ENCODE measurements at regions of chr6 and their contacts with region 1.

Region 1: DNA sequence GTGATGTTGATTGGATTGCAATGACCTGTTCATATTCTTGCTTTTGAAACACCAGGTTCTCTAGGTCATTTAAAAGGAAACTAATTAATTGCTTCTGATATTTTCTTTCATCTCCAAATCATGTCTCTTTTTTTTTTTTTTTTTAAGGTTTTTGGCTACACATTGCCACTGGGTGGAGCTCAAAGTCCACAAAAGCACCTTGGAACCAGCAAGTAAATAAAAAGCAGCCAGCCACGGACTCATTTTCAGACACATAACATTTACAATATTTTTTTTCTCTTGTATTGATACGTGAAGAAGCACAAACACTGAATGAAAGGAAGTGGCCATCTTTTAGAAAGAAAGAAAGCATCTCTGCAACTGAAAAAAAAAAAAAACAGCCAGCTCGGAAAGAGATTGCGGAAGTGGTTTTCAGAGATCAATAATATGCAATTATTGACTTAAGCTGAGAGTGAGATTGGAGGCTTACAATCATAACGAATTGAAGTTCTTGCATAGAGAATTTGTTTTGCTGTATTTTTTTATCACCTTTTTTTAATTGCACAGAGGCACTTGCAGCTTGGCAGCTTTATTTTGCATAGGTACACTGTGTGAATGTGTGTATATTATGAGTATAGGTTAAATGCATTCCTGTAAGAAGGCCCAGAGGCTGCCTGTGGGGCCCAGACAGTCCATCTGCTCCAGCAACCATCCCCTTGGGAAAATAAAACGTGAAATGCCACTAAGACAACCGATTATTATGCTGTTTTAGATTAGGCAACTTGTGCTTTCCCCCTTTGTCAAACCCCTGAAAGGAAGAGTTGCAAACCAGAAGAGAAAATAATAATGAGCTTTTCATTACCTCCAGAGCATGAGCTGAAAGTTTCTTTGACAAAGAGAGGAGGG is 28.2 kb downstream of the CGA start:
- DNase-seq: peak; percentile 70
- H3K4me3 ChIP-seq: no peak overlapping the region
- H3K27ac ChIP-seq: no peak overlapping the region
- H3K4me1 ChIP-seq: no peaks in the 10 kb centered on the region
- H3K27me3 ChIP-seq: peaks cover 13 to 16% of the 10 kb centered on the region in 2 experiments
- CTCF ChIP-seq: peak; percentile 30 to 35
- POLR2A ChIP-seq: no peak

Region 2: DNA sequence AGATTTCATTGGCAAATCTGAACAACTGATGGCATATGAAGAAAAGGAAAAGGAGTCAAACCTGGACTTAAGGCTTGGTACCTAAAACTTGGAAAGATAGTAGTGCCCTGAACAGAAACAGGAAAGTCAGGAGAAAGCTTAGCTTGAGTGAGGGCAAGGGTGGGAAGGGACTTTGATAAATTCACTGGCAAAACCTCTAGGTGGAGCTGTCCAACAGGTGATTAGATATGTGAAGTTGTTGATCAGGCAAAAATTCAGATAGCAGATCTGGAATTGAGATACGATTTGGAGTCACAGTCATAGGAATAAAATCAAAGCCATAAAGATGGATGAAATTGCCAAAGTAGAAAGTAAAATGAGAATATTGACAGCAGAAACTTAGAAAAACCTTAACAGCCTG is 72.5 kb after region 1 on chr6:
- CTCF ChIA-PET with region 1: interaction called, 5 read pairs
- POLR2A ChIA-PET with region 1: no interaction called
- dilution Hi-C with region 1: no loop called
- intact Hi-C with region 1: loop called (anchors 1 kb)
- DNase-seq: peak; percentile 61
- H3K4me3 ChIP-seq: no peak overlapping the region
- H3K27ac ChIP-seq: no peak overlapping the region
- H3K4me1 ChIP-seq: no peaks in the 10 kb centered on the region
- H3K27me3 ChIP-seq: peaks cover 0 to 8% of the 10 kb centered on the region in 2 experiments
- CTCF ChIP-seq: peak; percentile 55 to 59
- POLR2A ChIP-seq: no peak

Region 3: GRCh38 chr6:87393022-87393622 is 326.4 kb after region 1 on chr6:
- CTCF ChIA-PET with region 1: interaction called, 16 read pairs
- POLR2A ChIA-PET with region 1: no interaction called
- dilution Hi-C with region 1: no loop called
- intact Hi-C with region 1: loop called (anchors 2 kb)
- DNase-seq: peak; percentile 73
- H3K4me3 ChIP-seq: no peak overlapping the region
- H3K27ac ChIP-seq: no peak overlapping the region
- H3K4me1 ChIP-seq: no peaks in the 10 kb centered on the region
- H3K27me3 ChIP-seq: no peaks in the 10 kb centered on the region
- CTCF ChIP-seq: peak; percentile 32 to 39
- POLR2A ChIP-seq: no peak

Region 4: GRCh38 chr6:87832025-87832825 is 765.5 kb after region 1 on chr6:
- CTCF ChIA-PET with region 1: no interaction called
- POLR2A ChIA-PET with region 1: no interaction called
- dilution Hi-C with region 1: no loop called
- intact Hi-C with region 1: loop called (anchors 5 kb)
- DNase-seq: peak; percentile 64
- H3K4me3 ChIP-seq: peak overlapping the region; percentile 30 to 59 (median 33)
- H3K27ac ChIP-seq: no peak overlapping the region
- H3K4me1 ChIP-seq: no peaks in the 10 kb centered on the region
- H3K27me3 ChIP-seq: peaks cover 0 to 2% of the 10 kb centered on the region in 2 experiments
- CTCF ChIP-seq: peak; percentile 17 to 23
- POLR2A ChIP-seq: no peak

Region 5: DNA sequence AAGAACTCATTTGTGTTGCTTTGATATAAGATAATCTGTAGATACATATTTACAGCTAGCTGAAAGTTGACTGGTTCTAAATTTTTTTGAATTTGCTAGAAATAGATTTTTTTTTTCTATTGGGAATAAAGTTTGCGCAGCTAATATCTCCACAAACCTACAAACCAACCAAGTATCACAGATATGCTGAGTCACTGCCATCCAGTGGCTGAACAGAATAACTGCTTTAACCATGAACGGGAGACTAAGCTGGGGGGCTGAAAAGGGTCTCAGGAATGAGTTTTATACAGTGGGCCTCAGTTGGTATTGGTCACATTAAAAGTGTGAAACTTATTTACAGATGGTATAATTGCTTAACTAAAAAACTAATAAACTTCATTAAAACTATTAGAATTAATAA is 1426.1 kb after region 1 on chr6:
- CTCF ChIA-PET with region 1: interaction called, 16 read pairs
- POLR2A ChIA-PET with region 1: no interaction called
- dilution Hi-C with region 1: no loop called
- intact Hi-C with region 1: loop called (anchors 5 kb)
- DNase-seq: peak; percentile 41
- H3K4me3 ChIP-seq: no peak overlapping the region
- H3K27ac ChIP-seq: peak overlapping the region; percentile 11
- H3K4me1 ChIP-seq: peaks cover 4% of the 10 kb centered on the region
- H3K27me3 ChIP-seq: no peaks in the 10 kb centered on the region
- CTCF ChIP-seq: peak; percentile 40
- POLR2A ChIP-seq: no peak